CD8-positive, alpha-beta T cell (primary cell): ENCODE measurements at regions of chr14 and their contacts with region 1.

Region 1: DNA sequence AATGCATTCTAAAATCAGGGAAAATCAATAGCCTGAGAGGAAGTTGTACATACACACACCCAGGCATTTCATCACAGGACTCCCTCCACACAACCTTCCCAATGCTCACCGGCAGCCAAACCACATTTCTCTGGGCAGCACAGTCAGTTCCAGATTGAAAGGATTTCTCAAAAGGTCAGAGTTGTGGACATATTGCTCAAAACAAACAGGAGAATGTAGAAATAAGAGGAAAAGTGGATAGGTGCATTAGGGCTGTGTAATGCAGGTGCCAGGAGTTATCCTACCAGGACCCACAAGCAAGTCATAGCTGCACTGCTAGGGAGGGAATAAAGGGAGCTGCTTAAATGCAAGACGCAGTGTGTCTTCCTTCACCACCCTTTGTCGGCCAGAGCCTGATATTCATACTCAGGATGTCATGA is 62.9 kb downstream of the GCH1 start:
- DNase-seq: no peak
- ATAC-seq: no peak
- H3K4me3 ChIP-seq: no peak overlapping the region
- H3K4me3 Mint-ChIP-seq: no peak overlapping the region
- H3K27ac ChIP-seq: no peak overlapping the region
- H3K27ac Mint-ChIP-seq: no peak overlapping the region
- H3K4me1 ChIP-seq: no peaks in the 10 kb centered on the region
- H3K4me1 Mint-ChIP-seq: no peaks in the 10 kb centered on the region
- H3K27me3 ChIP-seq: no peaks in the 10 kb centered on the region
- H3K27me3 Mint-ChIP-seq: no peaks in the 10 kb centered on the region
- CTCF ChIP-seq: no peak

Region 2: DNA sequence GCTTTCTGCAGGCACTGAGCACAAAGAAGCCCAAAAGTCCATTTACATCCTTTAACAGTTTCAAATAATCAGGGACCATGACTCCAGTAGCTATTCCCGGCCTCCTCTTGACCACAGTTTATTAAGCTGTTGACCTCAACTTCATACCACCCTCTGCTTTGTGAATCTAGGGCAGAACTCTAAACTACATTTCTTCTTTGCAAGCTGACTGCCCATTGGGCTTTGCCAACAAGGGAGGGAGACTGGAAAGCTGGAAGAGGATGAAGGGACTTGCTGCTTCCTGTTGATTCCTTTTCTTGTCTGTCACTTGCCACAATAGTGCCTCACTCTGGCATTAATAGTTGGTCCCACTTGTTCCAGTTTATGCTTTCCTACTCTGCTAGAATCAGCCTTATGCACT is 327.3 kb before region 1 on chr14:
- CTCF ChIA-PET with region 1: no interaction called
- POLR2A ChIA-PET with region 1: no interaction called
- intact Hi-C with region 1: no loop called
- DNase-seq: no peak
- ATAC-seq: no peak
- H3K4me3 ChIP-seq: no peak overlapping the region
- H3K4me3 Mint-ChIP-seq: no peak overlapping the region
- H3K27ac ChIP-seq: no peak overlapping the region
- H3K27ac Mint-ChIP-seq: no peak overlapping the region
- H3K4me1 ChIP-seq: peaks cover 31% of the 10 kb centered on the region
- H3K4me1 Mint-ChIP-seq: peaks cover 55% of the 10 kb centered on the region
- H3K27me3 ChIP-seq: no peaks in the 10 kb centered on the region
- H3K27me3 Mint-ChIP-seq: no peaks in the 10 kb centered on the region
- CTCF ChIP-seq: no peak

Region 3: GRCh38 chr14:54893151-54893760 is 53.5 kb after region 1 on chr14:
- CTCF ChIA-PET with region 1: no interaction called
- POLR2A ChIA-PET with region 1: no interaction called
- intact Hi-C with region 1: loop called in 1 of 2 experiments (anchors 10 kb)
- DNase-seq: peak in 3 of 9 experiments; percentile 27 to 69 (median 63)
- ATAC-seq: peak; percentile 82
- H3K4me3 ChIP-seq: no peak overlapping the region
- H3K4me3 Mint-ChIP-seq: no peak overlapping the region
- H3K27ac ChIP-seq: no peak overlapping the region
- H3K27ac Mint-ChIP-seq: no peak overlapping the region
- H3K4me1 ChIP-seq: no peaks in the 10 kb centered on the region
- H3K4me1 Mint-ChIP-seq: peaks cover 52% of the 10 kb centered on the region
- H3K27me3 ChIP-seq: no peaks in the 10 kb centered on the region
- H3K27me3 Mint-ChIP-seq: no peaks in the 10 kb centered on the region
- CTCF ChIP-seq: peak; percentile 79